Right lobe of liver (tissue), 6 donors: ENCODE measurements at regions of chr12 and their contacts with region 1.

Region 1: GRCh38 chr12:21073822-21074460 is 57.1 kb upstream of the SLCO1B1 start:
- DNase-seq: peak in 1 of 3 donors; percentile 36
- ATAC-seq: no peak
- H3K4me3 ChIP-seq: no peak overlapping the region
- H3K27ac ChIP-seq: no peak overlapping the region
- H3K4me1 ChIP-seq: no peaks in the 10 kb centered on the region
- H3K27me3 ChIP-seq: no peaks in the 10 kb centered on the region
- CTCF ChIP-seq: no peak
- POLR2A ChIP-seq: no peak

Region 2: DNA sequence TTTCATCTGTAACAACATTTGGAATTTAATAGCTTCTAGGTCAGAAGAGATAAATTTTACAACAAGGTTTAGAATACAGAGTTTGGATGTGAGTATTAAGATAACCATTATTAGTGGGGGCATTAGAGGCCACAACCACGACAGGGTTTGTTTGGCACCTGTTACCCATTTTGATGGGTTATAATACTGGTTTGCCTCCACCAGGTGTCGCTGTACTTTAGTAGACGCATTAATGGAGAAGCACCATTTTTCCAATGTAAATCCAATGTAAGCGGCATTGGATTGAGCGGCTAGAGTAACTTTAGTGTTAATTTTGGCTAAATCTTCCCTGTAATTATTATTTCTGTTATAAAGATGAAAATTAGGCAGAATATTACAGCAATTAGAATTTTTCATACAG is 127.2 kb before region 1 on chr12:
- intact Hi-C with region 1: loop called in 1 of 2 experiments (anchors 10 kb)
- DNase-seq: no peak
- ATAC-seq: peak; percentile 27 to 69 (median 49)
- H3K4me3 ChIP-seq: no peak overlapping the region
- H3K27ac ChIP-seq: no peak overlapping the region
- H3K4me1 ChIP-seq: no peaks in the 10 kb centered on the region
- H3K27me3 ChIP-seq: no peaks in the 10 kb centered on the region
- CTCF ChIP-seq: peak; percentile 45 to 55 (median 52)
- POLR2A ChIP-seq: no peak

Region 3: DNA sequence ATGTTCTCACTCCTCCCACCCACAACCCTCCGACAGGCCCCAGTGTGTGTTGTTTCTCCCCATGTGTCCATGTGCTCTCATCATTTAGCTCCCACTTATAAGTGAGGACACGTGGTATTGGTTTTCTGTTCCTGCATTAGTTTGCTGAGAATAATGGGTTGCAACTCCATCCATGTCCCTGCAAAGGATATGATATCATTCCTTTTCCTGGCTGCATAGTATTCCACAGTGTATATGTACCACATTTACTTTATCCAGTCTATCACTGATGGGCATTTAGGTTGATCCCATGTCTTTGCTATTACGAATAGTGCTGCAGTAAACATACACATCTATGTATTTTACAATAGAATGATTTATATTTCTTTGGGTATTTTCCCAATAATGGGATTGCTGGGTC is 183.2 kb after region 1 on chr12:
- intact Hi-C with region 1: no loop called
- DNase-seq: no peak
- ATAC-seq: no peak
- H3K4me3 ChIP-seq: no peak overlapping the region
- H3K27ac ChIP-seq: no peak overlapping the region
- H3K4me1 ChIP-seq: peaks cover 0 to 5% (median 0%) of the 10 kb centered on the region in 4 donors
- H3K27me3 ChIP-seq: no peaks in the 10 kb centered on the region
- CTCF ChIP-seq: no peak
- POLR2A ChIP-seq: no peak